ENCODE measurements at regions of chr19 and their contacts with region 1.

Region 1: GRCh38 chr19:34041925-34042521 is 130.3 kb upstream of the LSM14A start:
- DNase-seq: peak; percentile 70 to 79
- ATAC-seq: peak; percentile 93 to 95
- H3K4me3 ChIP-seq: no peak overlapping the region
- H3K27ac ChIP-seq: no peak overlapping the region
- H3K4me1 ChIP-seq: no peaks in the 10 kb centered on the region
- CTCF ChIP-seq: peak; percentile 96
- EP300 ChIP-seq: no peak
- POLR2A ChIP-seq: no peak
- RAD21 ChIP-seq: peak; percentile 70 to 86

Region 2: DNA sequence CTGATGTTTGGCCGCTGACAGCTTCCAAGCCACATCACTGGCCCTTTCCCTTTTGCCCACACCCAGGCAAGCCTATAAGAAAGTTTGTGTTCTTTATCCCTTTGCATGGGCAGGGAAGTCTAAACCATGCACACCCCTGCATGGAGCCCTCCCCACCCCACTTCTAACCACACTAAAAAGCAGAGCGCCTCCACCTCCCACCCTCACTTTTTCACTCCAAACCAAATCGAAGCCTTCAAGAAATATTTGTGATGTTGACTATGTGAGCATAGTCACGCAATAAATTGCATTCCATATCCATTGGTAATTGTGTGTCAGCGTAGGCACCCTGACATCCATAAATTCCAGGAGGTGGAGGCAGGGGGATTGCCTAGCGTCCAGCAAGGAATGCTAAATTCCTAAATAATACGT is 25.8 kb after region 1 on chr19:
- CTCF ChIA-PET with region 1: interaction called, 33 read pairs
- POLR2A ChIA-PET with region 1: interaction called, 3 read pairs
- DNase-seq: peak; percentile 78 to 89
- ATAC-seq: peak; percentile 88 to 89
- H3K4me3 ChIP-seq: peak overlapping the region; percentile 1; the same call in 1 of the 3 replicates
- H3K27ac ChIP-seq: peak overlapping the region in 1 of 2 experiments; percentile 62; a peak in 3 of 6 replicates
- H3K4me1 ChIP-seq: peaks cover 18% of the 10 kb centered on the region
- CTCF ChIP-seq: no peak
- EP300 ChIP-seq: peak in 1 of 2 experiments; percentile 59; a peak in 1 of 5 replicates
- POLR2A ChIP-seq: no peak
- RAD21 ChIP-seq: no peak

Region 3: DNA sequence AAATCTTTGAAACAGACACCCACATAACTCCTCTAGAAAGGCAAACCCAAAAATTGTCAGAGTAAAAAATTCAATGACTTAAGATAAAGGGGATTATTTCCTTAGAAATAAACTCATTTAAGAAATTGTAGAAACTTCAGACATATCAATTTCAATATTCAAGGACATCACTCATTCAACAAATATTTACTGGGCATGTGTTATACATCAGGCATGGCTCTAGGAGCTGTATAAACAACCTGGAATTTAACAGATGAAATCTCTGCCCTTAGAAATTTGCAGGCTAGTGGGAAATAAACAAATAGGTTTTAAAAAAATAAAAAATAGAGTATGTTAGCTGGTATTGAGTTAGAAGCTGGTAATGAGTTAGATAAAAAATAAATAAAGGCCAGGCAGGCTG is 46.3 kb after region 1 on chr19:
- CTCF ChIA-PET with region 1: interaction called, 58 read pairs
- POLR2A ChIA-PET with region 1: no interaction called
- DNase-seq: no peak
- ATAC-seq: no peak
- H3K4me3 ChIP-seq: no peak overlapping the region
- H3K27ac ChIP-seq: no peak overlapping the region
- H3K4me1 ChIP-seq: no peaks in the 10 kb centered on the region
- CTCF ChIP-seq: no peak
- EP300 ChIP-seq: no peak
- POLR2A ChIP-seq: no peak
- RAD21 ChIP-seq: no peak

Measured in A549 (cell line).